ENCODE measurements at regions of chr10 and their contacts with region 1.

Region 1: DNA sequence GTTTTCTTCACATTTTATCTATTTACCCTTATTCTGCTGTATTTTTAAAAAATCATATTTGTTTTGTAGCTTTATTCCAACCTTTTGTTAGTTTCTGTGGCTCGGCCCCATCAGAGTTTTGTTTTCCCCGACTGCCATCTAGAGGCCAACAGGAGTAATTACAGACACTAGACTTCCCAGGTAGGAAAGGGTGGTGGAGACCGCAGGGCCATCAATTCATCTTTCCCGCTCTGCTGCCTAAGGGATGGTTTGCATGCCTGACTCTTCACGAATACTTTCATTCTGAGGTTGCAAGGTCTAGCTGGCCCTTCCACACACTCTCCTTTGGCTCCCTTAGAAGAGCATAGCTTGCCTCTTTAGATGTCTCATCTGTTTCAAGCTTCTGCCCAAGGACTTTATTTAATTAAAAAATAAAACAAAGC is 38.3 kb downstream of the LYZL2 start:
- DNase-seq: no peak
- H3K4me3 ChIP-seq: no peak overlapping the region
- H3K27me3 ChIP-seq: peaks cover 17% of the 10 kb centered on the region
- CTCF ChIP-seq: peak; percentile 78

Region 2: DNA sequence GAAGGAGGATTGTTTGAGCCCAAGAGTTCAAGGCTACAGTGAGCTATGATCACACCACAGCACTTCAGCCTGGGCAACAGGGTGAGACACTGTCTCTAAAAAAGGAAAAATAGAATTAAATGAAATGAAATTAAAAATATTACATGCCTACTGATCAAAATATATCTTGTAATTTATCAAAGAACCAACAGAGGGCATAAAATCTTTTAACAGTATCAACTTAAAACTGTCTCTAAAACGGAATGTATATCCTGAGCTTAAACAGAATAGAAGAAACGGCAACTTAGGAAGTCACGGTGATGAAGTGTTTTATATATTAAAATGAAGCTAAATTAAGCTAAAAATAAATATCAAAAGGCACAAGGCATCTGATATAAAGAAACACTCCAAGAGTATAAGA is 321.0 kb before region 1 on chr10:
- CTCF ChIA-PET with region 1: interaction called, 14 read pairs
- POLR2A ChIA-PET with region 1: no interaction called
- DNase-seq: no peak
- H3K4me3 ChIP-seq: no peak overlapping the region
- H3K27me3 ChIP-seq: peaks cover 4% of the 10 kb centered on the region; the same call in 1 of the 2 replicates
- CTCF ChIP-seq: no peak

Region 3: DNA sequence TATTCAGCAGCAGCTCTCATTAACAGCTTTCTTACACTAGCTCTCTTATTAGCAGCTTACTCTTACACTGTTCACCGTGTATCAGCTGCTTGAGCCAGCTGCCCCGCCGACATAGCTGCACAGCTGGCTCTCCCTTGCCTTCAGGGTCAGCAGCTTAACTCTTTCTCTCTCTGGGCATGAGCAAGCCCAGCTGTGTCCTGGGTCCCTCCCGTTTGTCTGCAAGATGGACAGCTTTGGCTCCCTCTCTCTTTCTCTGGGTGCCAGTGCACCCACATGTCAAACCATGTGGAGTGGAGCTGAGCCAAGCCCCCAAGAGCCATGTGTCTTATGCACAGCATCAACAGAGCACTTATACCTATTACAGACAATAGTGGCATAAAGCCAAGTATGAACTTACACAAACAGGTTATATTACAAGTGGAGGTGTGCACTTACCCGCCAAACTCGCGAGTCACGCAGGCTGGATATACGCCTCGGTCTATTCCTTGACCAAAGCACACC is 206.5 kb before region 1 on chr10:
- CTCF ChIA-PET with region 1: interaction called, 17 read pairs
- POLR2A ChIA-PET with region 1: no interaction called
- DNase-seq: no peak
- H3K4me3 ChIP-seq: no peak overlapping the region
- H3K27me3 ChIP-seq: peaks cover 13% of the 10 kb centered on the region
- CTCF ChIP-seq: peak; percentile 53

Region 4: DNA sequence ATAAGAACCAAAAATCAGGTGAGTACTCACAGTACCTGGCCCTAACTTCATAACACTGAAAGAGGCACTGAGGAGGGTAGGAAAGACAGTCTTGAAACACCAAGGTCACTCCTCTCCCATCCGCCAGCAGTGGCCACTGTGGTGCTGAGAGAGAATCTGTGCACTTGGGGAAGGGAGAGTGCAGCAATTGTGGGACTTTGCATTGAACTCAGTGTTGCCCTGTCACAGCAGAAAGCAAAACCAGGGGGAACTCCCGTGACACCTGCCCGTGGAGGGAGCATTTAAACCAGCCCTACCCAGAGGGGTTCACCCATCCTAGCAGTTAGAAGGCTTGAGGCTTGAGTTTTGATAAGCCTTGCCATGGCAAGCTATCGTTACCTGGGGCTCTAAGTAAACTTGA is 192.5 kb before region 1 on chr10:
- CTCF ChIA-PET with region 1: interaction called, 104 read pairs
- POLR2A ChIA-PET with region 1: no interaction called
- DNase-seq: no peak
- H3K4me3 ChIP-seq: no peak overlapping the region
- H3K27me3 ChIP-seq: peaks cover 16% of the 10 kb centered on the region
- CTCF ChIP-seq: no peak

Region 5: DNA sequence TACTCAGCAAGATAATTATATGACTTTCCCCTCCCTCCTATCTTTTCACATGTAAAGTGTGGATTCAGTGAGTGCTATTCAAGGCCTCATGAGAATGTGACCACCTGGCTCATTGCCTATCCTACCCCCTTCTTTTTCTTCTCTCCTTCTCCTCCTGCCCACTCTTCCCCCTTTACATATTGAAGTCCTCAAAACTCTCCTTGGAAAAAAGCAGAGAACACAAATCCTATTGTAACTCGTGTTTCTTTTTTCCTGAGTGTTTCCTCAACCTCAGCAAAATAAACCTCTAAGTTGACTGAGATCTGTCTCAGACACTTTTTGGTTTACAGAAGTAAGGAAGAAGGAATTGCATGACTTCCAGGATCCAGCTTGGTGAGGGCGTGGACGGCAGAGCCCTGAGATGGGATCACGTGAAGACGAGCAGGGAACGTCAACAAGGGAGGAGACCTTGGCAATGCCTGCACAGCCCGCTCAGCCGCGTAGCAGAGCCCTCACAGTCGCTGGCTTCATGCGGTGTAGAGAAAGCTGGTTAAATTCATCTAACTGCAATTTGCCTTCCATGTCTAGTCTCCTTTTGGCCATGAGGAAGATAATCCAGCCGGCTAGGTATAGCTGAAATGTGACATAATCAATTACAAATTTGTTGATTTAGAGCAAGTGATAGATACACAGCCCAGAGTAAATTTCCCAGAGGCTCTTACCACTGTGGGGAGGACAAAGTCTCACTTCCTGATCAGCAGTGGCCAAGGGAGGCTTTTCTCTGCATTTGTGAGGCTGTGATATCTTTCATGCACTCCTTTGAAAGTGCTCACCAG is 37.4 kb before region 1 on chr10:
- CTCF ChIA-PET with region 1: interaction called, 12 read pairs
- POLR2A ChIA-PET with region 1: no interaction called
- DNase-seq: peak; percentile 20
- H3K4me3 ChIP-seq: peak overlapping the region; percentile 1; the same call in 1 of the 2 replicates
- H3K27me3 ChIP-seq: no peaks in the 10 kb centered on the region
- CTCF ChIP-seq: no peak

Measured in BJ (cell line).